Naive thymus-derived CD4-positive, alpha-beta T cell (primary cell): ENCODE measurements at regions of chr2 and their contacts with region 1.

Region 1: GRCh38 chr2:101725515-101726192 is 28.1 kb downstream of the MAP4K4 start:
- DNase-seq: peak in 4 of 9 donors; percentile 31 to 43 (median 38)
- ATAC-seq: no peak
- H3K4me3 ChIP-seq: no peak overlapping the region
- H3K4me3 Mint-ChIP-seq: peak overlapping the region in 7 of 10 donors; percentile 2 to 55 (median 38)
- H3K27ac ChIP-seq: no peak overlapping the region
- H3K27ac Mint-ChIP-seq: peak overlapping the region in 5 of 9 donors; percentile 34 to 78 (median 38)
- H3K4me1 ChIP-seq: peaks cover 26 to 84% of the 10 kb centered on the region in 2 donors
- H3K4me1 Mint-ChIP-seq: peaks cover 66 to 99% (median 96%) of the 10 kb centered on the region in 7 donors
- H3K27me3 ChIP-seq: no peaks in the 10 kb centered on the region
- H3K27me3 Mint-ChIP-seq: no peaks in the 10 kb centered on the region

Region 2: DNA sequence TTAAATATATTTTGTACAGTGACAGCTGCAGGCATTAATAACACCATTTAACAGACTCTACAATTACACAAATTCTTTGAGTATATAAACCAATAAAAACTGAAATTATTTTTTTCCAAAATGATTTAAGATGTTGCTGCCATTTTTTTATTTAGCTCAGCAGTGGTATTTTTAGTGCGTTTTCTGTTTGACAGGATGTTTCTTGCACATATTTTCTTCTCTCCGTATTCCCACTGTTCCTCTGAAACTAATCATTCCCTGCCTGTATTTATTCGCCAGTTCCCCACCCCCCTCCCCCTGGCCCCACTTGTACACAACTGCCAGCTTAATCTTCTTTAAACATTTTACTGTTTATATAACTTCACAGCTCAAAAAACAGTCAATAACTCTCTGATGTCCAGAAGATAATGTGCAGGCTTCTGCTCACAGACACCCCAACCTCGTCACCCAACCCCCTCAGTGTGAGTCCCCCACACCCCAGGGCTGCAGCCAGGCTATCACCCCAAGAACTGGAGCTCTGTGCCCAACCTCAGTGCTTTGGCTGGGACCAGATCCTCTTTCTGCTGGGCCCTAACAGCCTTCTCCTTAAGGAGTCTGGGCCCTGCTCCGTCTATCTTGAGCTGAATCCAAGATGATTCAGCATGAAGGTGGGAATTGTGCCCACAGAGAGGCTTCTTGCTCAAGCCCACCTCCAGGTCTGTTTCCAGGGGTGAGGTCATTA is 69.8 kb before region 1 on chr2:
- CTCF ChIA-PET with region 1: no interaction called
- POLR2A ChIA-PET with region 1: no interaction called
- intact Hi-C with region 1: loop called in 1 of 2 experiments (anchors 5 kb)
- DNase-seq: no peak
- ATAC-seq: no peak
- H3K4me3 ChIP-seq: no peak overlapping the region
- H3K4me3 Mint-ChIP-seq: no peak overlapping the region
- H3K27ac ChIP-seq: no peak overlapping the region
- H3K27ac Mint-ChIP-seq: no peak overlapping the region
- H3K4me1 ChIP-seq: peaks cover 5 to 10% of the 10 kb centered on the region in 2 donors
- H3K4me1 Mint-ChIP-seq: peaks cover 11 to 25% (median 16%) of the 10 kb centered on the region in 7 donors
- H3K27me3 ChIP-seq: no peaks in the 10 kb centered on the region
- H3K27me3 Mint-ChIP-seq: no peaks in the 10 kb centered on the region

Region 3: GRCh38 chr2:101736861-101737291 is 11.2 kb after region 1 on chr2:
- CTCF ChIA-PET with region 1: interaction called, 3 read pairs
- POLR2A ChIA-PET with region 1: interaction called, 7 read pairs
- intact Hi-C with region 1: loop called in 1 of 2 experiments (anchors 2 kb)
- DNase-seq: no peak
- ATAC-seq: peak; percentile 64
- H3K4me3 ChIP-seq: no peak overlapping the region
- H3K4me3 Mint-ChIP-seq: peak overlapping the region in 7 of 10 donors; percentile 1 to 60 (median 17)
- H3K27ac ChIP-seq: no peak overlapping the region
- H3K27ac Mint-ChIP-seq: peak overlapping the region; percentile 3 to 89 (median 56)
- H3K4me1 ChIP-seq: peaks cover 43 to 59% of the 10 kb centered on the region in 2 donors
- H3K4me1 Mint-ChIP-seq: peaks cover 60 to 98% (median 93%) of the 10 kb centered on the region in 7 donors
- H3K27me3 ChIP-seq: no peaks in the 10 kb centered on the region
- H3K27me3 Mint-ChIP-seq: no peaks in the 10 kb centered on the region